ENCODE measurements at regions of chr15 and their contacts with region 1.

Region 1: DNA sequence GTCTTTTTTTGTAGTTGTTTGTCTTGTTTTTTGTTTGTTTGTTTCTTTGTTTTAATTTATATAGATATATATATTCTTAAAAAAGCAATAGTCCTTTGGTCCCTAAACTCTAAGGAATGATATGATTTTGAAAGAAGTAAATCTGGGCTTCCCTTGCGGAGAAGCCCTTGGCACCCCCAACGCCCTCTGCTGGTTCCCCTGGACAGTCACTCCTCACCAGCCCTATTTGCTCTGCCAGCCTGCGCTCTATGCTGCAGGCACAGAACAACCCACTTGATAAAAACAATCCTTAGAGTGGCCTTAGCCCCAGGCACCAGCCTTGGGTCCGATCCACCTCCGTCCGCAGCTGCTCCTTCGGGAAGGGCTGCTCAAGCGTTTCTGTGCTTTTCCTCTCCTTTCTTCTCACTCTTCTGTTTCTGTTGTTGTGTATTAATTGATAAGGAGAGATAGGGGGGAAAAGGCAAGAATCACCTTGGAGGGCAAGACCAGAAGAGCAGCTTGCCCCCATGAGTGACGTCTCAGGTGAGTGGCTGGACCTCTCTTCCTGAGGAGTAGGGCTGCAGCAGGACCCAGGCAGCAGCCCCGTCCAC is 13.7 kb upstream of the PARP6 start:
- DNase-seq: peak; percentile 72 to 83
- ATAC-seq: peak; percentile 75 to 91; a peak in 5 of 6 replicates
- H3K4me3 ChIP-seq: no peak overlapping the region
- H3K27ac ChIP-seq: no peak overlapping the region
- H3K4me1 ChIP-seq: no peaks in the 10 kb centered on the region
- CTCF ChIP-seq: peak; percentile 77
- EP300 ChIP-seq: no peak
- POLR2A ChIP-seq: no peak
- RAD21 ChIP-seq: peak; percentile 58 to 66

Region 2: GRCh38 chr15:72199711-72200212 is 86.3 kb before region 1 on chr15:
- CTCF ChIA-PET with region 1: interaction called, 69 read pairs
- POLR2A ChIA-PET with region 1: no interaction called
- DNase-seq: peak; percentile 89 to 93
- ATAC-seq: peak; percentile 33 to 68
- H3K4me3 ChIP-seq: no peak overlapping the region
- H3K27ac ChIP-seq: peak overlapping the region in 1 of 2 experiments; percentile 26; a peak in 3 of 6 replicates
- H3K4me1 ChIP-seq: peaks cover 54% of the 10 kb centered on the region
- CTCF ChIP-seq: peak; percentile 94
- EP300 ChIP-seq: no peak
- POLR2A ChIP-seq: no peak
- RAD21 ChIP-seq: peak; percentile 92 to 94

Region 3: DNA sequence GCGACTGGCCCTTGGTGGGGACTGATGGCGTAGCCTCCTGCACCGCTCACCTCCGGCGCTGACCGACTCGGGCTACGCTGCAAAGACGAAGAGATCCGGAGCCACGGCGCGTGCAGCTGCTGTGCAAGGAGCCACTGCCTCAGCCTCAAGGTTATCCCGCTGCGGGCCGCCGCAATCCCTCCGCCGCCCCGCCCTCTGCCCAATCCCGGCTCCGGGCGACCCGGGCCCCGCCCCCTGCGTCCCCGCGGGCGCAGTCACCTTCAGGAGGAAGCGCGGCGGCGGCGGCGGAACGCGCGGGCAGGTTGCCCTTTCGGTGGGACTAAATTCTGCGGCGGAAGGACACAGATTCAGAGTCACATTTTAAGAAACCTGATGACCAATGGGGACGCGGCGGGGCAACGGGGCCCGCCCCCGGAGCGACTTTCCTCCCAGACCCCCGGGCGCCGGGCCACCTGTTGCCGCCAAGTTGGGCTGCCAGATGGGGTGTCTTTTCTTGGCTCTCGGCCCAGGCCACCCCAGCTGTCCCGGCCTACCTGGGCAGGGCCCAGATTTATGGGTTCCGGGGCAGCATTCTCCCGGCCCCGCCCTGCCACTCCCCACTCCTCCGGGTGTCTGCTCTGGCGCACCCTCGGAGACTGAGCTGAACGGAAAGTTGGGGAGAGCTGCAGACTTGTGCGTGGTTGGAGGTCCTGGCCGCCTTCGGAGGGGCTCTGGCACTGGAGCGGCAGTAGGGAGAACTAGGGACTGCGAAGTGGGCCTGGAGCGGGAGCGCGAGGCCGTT is 54.8 kb before region 1 on chr15 and contains the start of gene PKM:
- CTCF ChIA-PET with region 1: interaction called, 11 read pairs
- POLR2A ChIA-PET with region 1: interaction called, 3 read pairs
- DNase-seq: peak; percentile 93 to 100
- ATAC-seq: peak; percentile 60 to 75
- H3K4me3 ChIP-seq: peak within 1 kb of the TSS; percentile 91
- H3K27ac ChIP-seq: peak within 1 kb of the TSS; percentile 97
- H3K4me1 ChIP-seq: peaks cover 53% of the 10 kb centered on the region
- CTCF ChIP-seq: no peak
- EP300 ChIP-seq: peak; percentile 11 to 57; a peak in 1 of 5 replicates
- POLR2A ChIP-seq: peak; percentile 100
- RAD21 ChIP-seq: no peak; a peak in 1 of 5 replicates
- polyA plus RNA-seq, gene PKM: 2,741 and 3,443 TPM in 2 replicates

Region 4: GRCh38 chr15:72306211-72306785 is 20.3 kb after region 1 on chr15:
- CTCF ChIA-PET with region 1: interaction called, 20 read pairs
- POLR2A ChIA-PET with region 1: no interaction called
- DNase-seq: peak in 1 of 2 experiments; percentile 42
- ATAC-seq: peak in 1 of 2 experiments; percentile 17; a peak in 1 of 6 replicates
- H3K4me3 ChIP-seq: no peak overlapping the region
- H3K27ac ChIP-seq: no peak overlapping the region
- H3K4me1 ChIP-seq: peaks cover 6% of the 10 kb centered on the region; the same call in 2 of the 3 replicates
- CTCF ChIP-seq: no peak
- EP300 ChIP-seq: no peak
- POLR2A ChIP-seq: no peak
- RAD21 ChIP-seq: no peak

Region 5: GRCh38 chr15:72473614-72474465 is 187.8 kb after region 1 on chr15 and contains the start of gene ARIH1:
- CTCF ChIA-PET with region 1: no interaction called
- POLR2A ChIA-PET with region 1: no interaction called
- DNase-seq: peak; percentile 81 to 99
- ATAC-seq: peak; percentile 86 to 88
- H3K4me3 ChIP-seq: peak within 1 kb of the TSS; percentile 81
- H3K27ac ChIP-seq: peak within 1 kb of the TSS; percentile 90 to 93
- H3K4me1 ChIP-seq: peaks cover 21% of the 10 kb centered on the region
- CTCF ChIP-seq: peak; percentile 53
- EP300 ChIP-seq: no peak
- POLR2A ChIP-seq: peak; percentile 95
- RAD21 ChIP-seq: peak in 1 of 2 experiments; percentile 39; a peak in 3 of 5 replicates
- polyA plus RNA-seq, gene ARIH1: 127 and 138 TPM in 2 replicates